ENCODE measurements at regions of chr17 and their contacts with region 1.

Region 1: GRCh38 chr17:21705021-21705601 is 12.8 kb downstream of the KCNJ18 start:
- DNase-seq: no peak
- H3K4me3 ChIP-seq: no peak overlapping the region
- H3K27ac ChIP-seq: no peak overlapping the region
- H3K4me1 ChIP-seq: no peaks in the 10 kb centered on the region
- H3K27me3 ChIP-seq: no peaks in the 10 kb centered on the region
- CTCF ChIP-seq: no peak
- EP300 ChIP-seq: no peak
- POLR2A ChIP-seq: no peak

Region 2: GRCh38 chr17:21419299-21420239 is 285.5 kb before region 1 on chr17:
- in situ Hi-C with region 1: loop called in 1 of 4 experiments (anchors 10 kb)
- intact Hi-C with region 1: no loop called
- DNase-seq: no peak
- H3K4me3 ChIP-seq: no peak overlapping the region
- H3K27ac ChIP-seq: no peak overlapping the region
- H3K4me1 ChIP-seq: peaks cover 0 to 33% (median 17%) of the 10 kb centered on the region in 4 donors
- H3K27me3 ChIP-seq: no peaks in the 10 kb centered on the region
- CTCF ChIP-seq: no peak
- EP300 ChIP-seq: no peak
- POLR2A ChIP-seq: no peak

Region 3: GRCh38 chr17:21457051-21458026 is 247.8 kb before region 1 on chr17:
- in situ Hi-C with region 1: no loop called
- intact Hi-C with region 1: no loop called
- DNase-seq: peak; percentile 94
- H3K4me3 ChIP-seq: no peak overlapping the region
- H3K27ac ChIP-seq: no peak overlapping the region
- H3K4me1 ChIP-seq: peaks cover 0 to 7% (median 2%) of the 10 kb centered on the region in 4 donors
- H3K27me3 ChIP-seq: peaks cover 5% of the 10 kb centered on the region
- CTCF ChIP-seq: peak; percentile 84 to 98 (median 93)
- EP300 ChIP-seq: no peak
- POLR2A ChIP-seq: no peak

Region 4: GRCh38 chr17:21475571-21475970 is 229.5 kb before region 1 on chr17:
- in situ Hi-C with region 1: no loop called
- intact Hi-C with region 1: no loop called
- DNase-seq: no peak
- H3K4me3 ChIP-seq: no peak overlapping the region
- H3K27ac ChIP-seq: no peak overlapping the region
- H3K4me1 ChIP-seq: no peaks in the 10 kb centered on the region
- H3K27me3 ChIP-seq: peaks cover 17% of the 10 kb centered on the region
- CTCF ChIP-seq: no peak
- EP300 ChIP-seq: no peak
- POLR2A ChIP-seq: no peak

Measured in transverse colon (tissue), 4 donors.